Naive thymus-derived CD4-positive, alpha-beta T cell (primary cell): ENCODE measurements at regions of chr1 and their contacts with region 1.

Region 1: GRCh38 chr1:64906447-64906846 is 59.9 kb downstream of the JAK1 start:
- DNase-seq: peak in 1 of 9 donors; percentile 36
- ATAC-seq: no peak
- H3K4me3 ChIP-seq: no peak overlapping the region
- H3K4me3 Mint-ChIP-seq: peak overlapping the region in 8 of 10 donors; percentile 4 to 66 (median 15)
- H3K27ac ChIP-seq: no peak overlapping the region
- H3K27ac Mint-ChIP-seq: peak overlapping the region in 6 of 9 donors; percentile 2 to 69 (median 38)
- H3K4me1 ChIP-seq: peaks cover 53 to 69% of the 10 kb centered on the region in 2 donors
- H3K4me1 Mint-ChIP-seq: peaks cover 42 to 100% (median 98%) of the 10 kb centered on the region in 7 donors
- H3K27me3 ChIP-seq: no peaks in the 10 kb centered on the region
- H3K27me3 Mint-ChIP-seq: no peaks in the 10 kb centered on the region

Region 2: DNA sequence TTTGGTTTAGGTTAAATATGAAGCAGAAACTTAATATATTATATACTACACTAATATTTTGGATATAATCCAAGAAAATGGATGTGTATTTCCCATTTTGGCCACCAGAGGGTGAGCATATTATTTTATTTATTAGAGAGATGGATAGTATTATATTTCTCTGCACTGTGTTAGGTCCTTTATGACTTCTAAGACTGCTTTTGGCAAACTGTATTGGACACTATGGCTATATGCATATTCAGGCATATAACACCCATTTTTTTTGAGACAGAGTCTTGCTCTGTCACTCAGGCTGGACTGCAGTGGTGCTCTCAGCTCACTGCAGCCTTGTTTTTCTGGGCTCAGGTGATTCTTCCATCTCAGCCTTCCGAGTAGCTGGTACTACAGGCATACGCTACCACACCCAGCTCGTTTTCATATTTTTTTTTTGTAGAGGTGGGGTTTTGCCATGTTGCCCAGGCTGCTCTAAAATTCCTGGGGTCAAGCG is 1331.1 kb before region 1 on chr1:
- CTCF ChIA-PET with region 1: no interaction called
- POLR2A ChIA-PET with region 1: no interaction called
- intact Hi-C with region 1: no loop called
- DNase-seq: peak in 6 of 9 donors; percentile 12 to 40 (median 24)
- ATAC-seq: peak; percentile 52
- H3K4me3 ChIP-seq: no peak overlapping the region
- H3K4me3 Mint-ChIP-seq: no peak overlapping the region
- H3K27ac ChIP-seq: no peak overlapping the region
- H3K27ac Mint-ChIP-seq: no peak overlapping the region
- H3K4me1 ChIP-seq: no peaks in the 10 kb centered on the region
- H3K4me1 Mint-ChIP-seq: no peaks in the 10 kb centered on the region
- H3K27me3 ChIP-seq: no peaks in the 10 kb centered on the region
- H3K27me3 Mint-ChIP-seq: no peaks in the 10 kb centered on the region

Region 3: GRCh38 chr1:64826991-64827390 is 79.5 kb before region 1 on chr1:
- CTCF ChIA-PET with region 1: no interaction called
- POLR2A ChIA-PET with region 1: no interaction called
- intact Hi-C with region 1: no loop called
- DNase-seq: no peak
- ATAC-seq: peak; percentile 69
- H3K4me3 ChIP-seq: no peak overlapping the region
- H3K4me3 Mint-ChIP-seq: peak overlapping the region in 7 of 10 donors; percentile 2 to 51 (median 34)
- H3K27ac ChIP-seq: no peak overlapping the region
- H3K27ac Mint-ChIP-seq: peak overlapping the region; percentile 14 to 64 (median 37)
- H3K4me1 ChIP-seq: peaks cover 20 to 22% of the 10 kb centered on the region in 2 donors
- H3K4me1 Mint-ChIP-seq: peaks cover 23 to 52% (median 41%) of the 10 kb centered on the region in 7 donors
- H3K27me3 ChIP-seq: no peaks in the 10 kb centered on the region
- H3K27me3 Mint-ChIP-seq: peaks cover 0 to 2% (median 0%) of the 10 kb centered on the region in 5 donors

Region 4: DNA sequence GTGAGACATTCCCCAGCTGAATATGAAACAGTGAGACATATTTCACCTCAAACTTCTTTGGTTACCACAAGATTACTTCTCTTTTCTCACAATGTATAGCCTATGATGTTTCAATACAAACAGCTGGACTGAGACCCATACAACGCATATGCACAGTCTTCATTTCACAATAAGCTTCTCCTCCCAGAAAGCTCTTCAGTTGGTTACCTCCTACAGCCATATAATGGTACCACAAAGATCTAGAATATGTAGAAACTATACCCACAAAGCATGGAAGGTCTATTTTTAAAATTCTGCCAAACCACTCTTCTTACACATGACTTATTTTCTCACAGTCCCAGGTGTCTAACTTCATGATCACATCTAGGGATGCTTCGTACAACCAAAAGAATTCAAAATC is 10.9 kb before region 1 on chr1:
- CTCF ChIA-PET with region 1: interaction called, 3 read pairs
- POLR2A ChIA-PET with region 1: no interaction called
- intact Hi-C with region 1: loop called in 1 of 2 experiments (anchors 1 kb)
- DNase-seq: no peak
- ATAC-seq: peak; percentile 54
- H3K4me3 ChIP-seq: no peak overlapping the region
- H3K4me3 Mint-ChIP-seq: peak overlapping the region in 8 of 10 donors; percentile 7 to 62 (median 36)
- H3K27ac ChIP-seq: no peak overlapping the region
- H3K27ac Mint-ChIP-seq: peak overlapping the region in 5 of 9 donors; percentile 1 to 48 (median 43)
- H3K4me1 ChIP-seq: peaks cover 70 to 79% of the 10 kb centered on the region in 2 donors
- H3K4me1 Mint-ChIP-seq: peaks cover 68 to 100% (median 97%) of the 10 kb centered on the region in 7 donors
- H3K27me3 ChIP-seq: no peaks in the 10 kb centered on the region
- H3K27me3 Mint-ChIP-seq: no peaks in the 10 kb centered on the region

Region 5: DNA sequence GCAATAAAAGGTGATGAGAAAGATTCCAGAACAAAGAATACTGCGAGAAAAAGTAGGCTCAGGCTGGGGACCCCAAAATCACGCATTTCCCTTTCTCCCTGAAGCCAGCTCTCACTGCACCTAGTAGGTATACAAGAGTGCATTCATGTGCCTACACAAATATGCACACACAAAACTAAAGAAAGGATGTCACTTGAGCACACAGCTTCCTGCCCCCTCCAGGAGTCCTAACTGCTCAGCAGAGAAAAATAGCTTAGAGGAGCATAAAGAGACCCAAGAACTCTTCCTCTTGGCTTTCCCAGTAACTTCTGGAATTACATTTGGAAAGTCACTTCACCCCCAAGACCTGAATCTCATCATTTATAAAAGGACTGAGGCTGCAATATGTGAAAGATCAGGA is 21.9 kb after region 1 on chr1:
- CTCF ChIA-PET with region 1: no interaction called
- POLR2A ChIA-PET with region 1: interaction called, 3 read pairs
- intact Hi-C with region 1: loop called in 1 of 2 experiments (anchors 2 kb)
- DNase-seq: no peak
- ATAC-seq: no peak
- H3K4me3 ChIP-seq: no peak overlapping the region
- H3K4me3 Mint-ChIP-seq: peak overlapping the region in 9 of 10 donors; percentile 22 to 66 (median 57)
- H3K27ac ChIP-seq: no peak overlapping the region
- H3K27ac Mint-ChIP-seq: peak overlapping the region in 8 of 9 donors; percentile 17 to 73 (median 41)
- H3K4me1 ChIP-seq: peaks cover 53 to 57% of the 10 kb centered on the region in 2 donors
- H3K4me1 Mint-ChIP-seq: peaks cover 63 to 95% (median 89%) of the 10 kb centered on the region in 7 donors
- H3K27me3 ChIP-seq: no peaks in the 10 kb centered on the region
- H3K27me3 Mint-ChIP-seq: no peaks in the 10 kb centered on the region

Region 6: DNA sequence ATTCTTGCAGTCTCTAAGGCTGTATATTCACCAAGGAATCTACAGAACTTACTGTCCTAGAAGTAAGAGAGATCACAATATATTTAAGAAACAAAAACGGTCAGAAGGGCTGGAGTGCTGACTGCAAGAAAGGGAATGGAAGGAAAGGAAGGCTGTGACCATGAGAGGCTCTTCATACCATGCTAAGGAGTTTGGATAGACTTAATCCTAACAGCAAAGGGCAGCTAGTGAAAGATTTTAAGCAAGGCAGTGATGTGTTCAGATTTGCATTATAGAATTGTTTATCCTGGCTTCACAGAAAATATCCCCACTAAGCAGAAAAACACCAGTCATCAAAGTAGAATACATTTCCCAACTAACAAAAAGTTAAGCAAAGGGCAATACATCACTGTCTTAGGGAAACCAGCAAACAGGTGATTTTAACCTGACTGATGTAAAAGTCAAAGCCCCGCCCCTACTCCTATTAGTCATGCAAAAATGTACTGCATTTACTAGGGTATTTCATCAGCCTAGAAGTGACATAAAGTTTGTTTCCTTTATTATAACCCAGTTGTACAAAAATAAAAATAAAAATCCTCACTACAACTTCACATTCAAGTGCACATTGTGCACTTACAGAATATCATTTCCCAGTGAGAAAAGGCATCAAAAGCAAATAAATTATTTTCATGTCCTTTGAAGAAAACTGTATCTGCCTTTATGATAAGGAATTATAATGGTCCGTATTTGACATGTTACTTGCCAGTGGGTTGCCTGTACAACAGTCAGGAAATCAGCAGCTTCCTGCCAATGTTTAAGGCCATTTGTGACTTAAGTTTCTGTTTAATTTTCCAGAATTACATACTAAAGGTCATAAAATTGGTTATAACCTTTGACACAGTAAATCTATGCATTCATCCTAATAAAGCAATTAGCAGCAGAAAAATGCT is 42.7 kb after region 1 on chr1:
- CTCF ChIA-PET with region 1: no interaction called
- POLR2A ChIA-PET with region 1: no interaction called
- intact Hi-C with region 1: loop called in 1 of 2 experiments (anchors 5 kb)
- DNase-seq: peak in 1 of 9 donors; percentile 42
- ATAC-seq: peak; percentile 72
- H3K4me3 ChIP-seq: no peak overlapping the region
- H3K4me3 Mint-ChIP-seq: peak overlapping the region; percentile 2 to 69 (median 26)
- H3K27ac ChIP-seq: no peak overlapping the region
- H3K27ac Mint-ChIP-seq: peak overlapping the region in 7 of 9 donors; percentile 2 to 81 (median 19)
- H3K4me1 ChIP-seq: peaks cover 56 to 58% of the 10 kb centered on the region in 2 donors
- H3K4me1 Mint-ChIP-seq: peaks cover 62 to 86% (median 72%) of the 10 kb centered on the region in 7 donors
- H3K27me3 ChIP-seq: no peaks in the 10 kb centered on the region
- H3K27me3 Mint-ChIP-seq: no peaks in the 10 kb centered on the region